ENCODE measurements at regions of chr15 and their contacts with region 1.

Region 1: DNA sequence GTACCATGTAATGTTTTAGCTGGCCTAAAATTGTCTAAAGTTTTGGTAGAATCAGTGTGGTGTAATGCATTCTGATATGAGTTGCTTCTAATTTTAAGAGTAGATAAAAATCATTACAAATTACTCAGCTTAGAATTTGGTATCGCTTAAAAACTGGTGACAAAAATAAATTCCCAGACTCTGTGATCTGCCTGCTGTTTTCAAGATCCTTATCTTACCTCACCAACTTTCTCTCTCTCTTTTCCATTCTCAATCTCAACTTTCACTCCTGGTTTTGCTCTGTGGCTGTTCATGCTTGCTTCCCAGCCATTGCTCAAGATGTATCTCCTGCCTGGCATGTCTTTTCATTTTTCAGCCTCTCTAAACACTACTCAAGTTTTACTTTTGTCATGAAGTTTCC is 45.7 kb downstream of the TCF12 start:
- DNase-seq: no peak
- H3K4me3 Mint-ChIP-seq: no peak overlapping the region
- H3K27ac Mint-ChIP-seq: no peak overlapping the region
- H3K4me1 Mint-ChIP-seq: peaks cover 20% of the 10 kb centered on the region
- H3K27me3 Mint-ChIP-seq: peaks cover 7% of the 10 kb centered on the region

Region 2: DNA sequence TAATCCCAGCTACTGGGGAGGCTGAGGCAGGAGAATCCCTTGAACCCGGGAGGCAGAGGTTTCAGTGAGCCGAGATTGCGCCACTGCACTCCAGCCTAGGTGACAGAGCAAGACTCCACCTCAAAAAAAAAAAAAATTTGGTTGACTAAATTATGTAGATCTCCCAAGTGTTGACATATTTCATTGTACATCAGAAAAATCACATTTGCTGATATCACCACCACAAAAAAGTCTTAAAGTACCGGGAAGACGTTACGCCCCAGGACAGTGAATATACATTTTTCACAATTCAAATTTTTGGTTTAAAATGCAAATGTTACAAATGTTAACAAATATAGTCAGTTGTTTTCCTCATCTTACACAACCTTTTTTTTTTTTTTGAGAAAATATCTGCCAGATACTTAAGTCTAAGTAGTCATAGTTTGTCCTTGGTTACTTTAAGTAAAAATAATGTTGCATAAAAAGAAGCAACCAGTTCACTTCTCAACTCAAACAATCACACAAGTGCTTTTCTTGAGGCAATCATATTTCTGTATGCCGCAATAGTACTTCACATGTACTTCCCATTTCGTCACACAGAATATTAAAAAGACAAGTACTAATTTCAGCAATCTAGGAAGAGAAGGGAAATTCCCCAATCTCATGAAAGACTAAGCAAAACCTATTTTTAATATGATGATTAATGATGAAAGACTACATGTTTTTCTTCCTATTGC is 86.8 kb before region 1 on chr15:
- intact Hi-C with region 1: no loop called
- DNase-seq: no peak
- H3K4me3 Mint-ChIP-seq: no peak overlapping the region
- H3K27ac Mint-ChIP-seq: no peak overlapping the region
- H3K4me1 Mint-ChIP-seq: no peaks in the 10 kb centered on the region
- H3K27me3 Mint-ChIP-seq: peaks cover 23% of the 10 kb centered on the region

Region 3: GRCh38 chr15:56989411-56989924 is 25.3 kb after region 1 on chr15:
- intact Hi-C with region 1: loop called (anchors 2 kb)
- DNase-seq: no peak
- H3K4me3 Mint-ChIP-seq: no peak overlapping the region
- H3K27ac Mint-ChIP-seq: no peak overlapping the region
- H3K4me1 Mint-ChIP-seq: peaks cover 32% of the 10 kb centered on the region
- H3K27me3 Mint-ChIP-seq: no peaks in the 10 kb centered on the region